Endothelial cell of umbilical vein (primary cell): ENCODE measurements at regions of chr5 and their contacts with region 1.

Region 1: GRCh38 chr5:154754460-154755360 is 467 bp upstream of the LARP1 start:
- DNase-seq: peak; percentile 99
- H3K4me3 ChIP-seq: peak overlapping the region; percentile 0 to 86 (median 7)
- H3K27ac ChIP-seq: peak overlapping the region; percentile 62
- H3K4me1 ChIP-seq: peaks cover 27% of the 10 kb centered on the region
- H3K27me3 ChIP-seq: no peaks in the 10 kb centered on the region
- CTCF ChIP-seq: peak; percentile 31 to 68
- POLR2A ChIP-seq: peak; percentile 80

Region 2: GRCh38 chr5:154647114-154647760 is 107.5 kb before region 1 on chr5:
- CTCF ChIA-PET with region 1: interaction called, 7 read pairs
- POLR2A ChIA-PET with region 1: no interaction called
- dilution Hi-C with region 1: no loop called
- intact Hi-C with region 1: loop called (anchors 1 kb)
- DNase-seq: peak; percentile 19
- H3K4me3 ChIP-seq: peak overlapping the region; percentile 1 to 28 (median 9)
- H3K27ac ChIP-seq: no peak overlapping the region
- H3K4me1 ChIP-seq: peaks cover 6% of the 10 kb centered on the region
- H3K27me3 ChIP-seq: no peaks in the 10 kb centered on the region
- CTCF ChIP-seq: no peak
- POLR2A ChIP-seq: no peak

Region 3: DNA sequence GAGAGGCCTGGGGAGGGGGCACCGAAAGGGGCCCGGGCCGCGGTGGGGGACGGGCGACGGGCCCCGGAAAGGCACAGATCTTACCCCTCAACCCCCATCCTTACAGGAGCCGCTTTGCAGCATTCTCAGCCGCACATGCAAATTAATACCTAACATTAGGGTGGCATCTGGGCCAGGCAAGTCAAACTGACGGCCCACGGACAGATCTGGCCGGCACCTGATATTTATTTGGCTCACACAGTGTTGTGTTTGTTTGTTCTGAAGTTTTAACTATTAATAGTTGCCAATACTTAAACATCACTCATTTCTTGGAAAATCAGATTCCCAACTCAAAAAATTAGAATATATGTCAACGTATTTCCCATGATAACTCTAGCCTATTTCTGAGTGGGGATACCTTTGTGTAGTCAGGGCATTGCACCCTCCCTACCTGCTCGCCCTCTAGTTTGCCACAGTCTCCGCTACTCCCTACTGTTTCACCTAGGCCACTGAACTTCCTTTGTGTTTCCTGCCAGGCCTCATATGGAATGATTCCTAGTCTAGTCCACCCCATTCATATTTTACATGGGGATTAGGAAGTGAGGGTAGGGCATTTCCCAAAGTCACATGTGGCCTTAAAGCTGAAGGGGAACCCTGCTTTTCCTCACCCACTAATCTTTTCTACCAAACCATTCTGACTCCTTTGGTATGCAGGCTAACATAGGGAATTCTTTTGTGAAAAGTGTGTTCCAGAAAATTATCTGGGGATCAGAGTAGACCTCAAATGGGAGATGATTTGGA is 71.4 kb before region 1 on chr5:
- CTCF ChIA-PET with region 1: no interaction called
- POLR2A ChIA-PET with region 1: no interaction called
- dilution Hi-C with region 1: no loop called
- intact Hi-C with region 1: loop called (anchors 1 kb)
- DNase-seq: no peak
- H3K4me3 ChIP-seq: peak overlapping the region in 1 of 3 experiments; percentile 53
- H3K27ac ChIP-seq: no peak overlapping the region
- H3K4me1 ChIP-seq: peaks cover 8% of the 10 kb centered on the region
- H3K27me3 ChIP-seq: no peaks in the 10 kb centered on the region
- CTCF ChIP-seq: no peak
- POLR2A ChIP-seq: no peak

Region 4: DNA sequence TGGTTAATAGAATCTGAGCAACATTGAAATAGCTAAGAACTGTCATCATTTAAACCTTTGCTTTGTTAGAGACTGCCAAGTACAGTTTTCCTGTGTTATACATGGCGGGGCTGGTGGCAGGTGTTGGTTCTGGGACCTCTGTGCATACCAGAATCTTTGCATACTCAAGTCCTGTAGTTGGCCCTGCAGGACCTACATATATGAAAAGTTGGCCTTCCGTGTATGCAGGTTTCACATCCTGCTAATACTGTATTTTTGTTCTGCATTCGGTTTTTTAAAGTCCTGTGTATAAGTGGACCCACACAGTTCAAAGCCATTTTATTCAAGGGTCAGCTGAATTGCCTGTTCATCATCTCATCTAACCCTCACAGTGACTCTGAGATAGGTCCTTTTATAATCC is 36.8 kb after region 1 on chr5:
- CTCF ChIA-PET with region 1: no interaction called
- POLR2A ChIA-PET with region 1: interaction called, 4 read pairs
- dilution Hi-C with region 1: no loop called
- intact Hi-C with region 1: loop called (anchors 5 kb)
- DNase-seq: no peak
- H3K4me3 ChIP-seq: no peak overlapping the region
- H3K27ac ChIP-seq: no peak overlapping the region
- H3K4me1 ChIP-seq: peaks cover 20% of the 10 kb centered on the region
- H3K27me3 ChIP-seq: no peaks in the 10 kb centered on the region
- CTCF ChIP-seq: no peak
- POLR2A ChIP-seq: no peak

Region 5: GRCh38 chr5:154940772-154941620 is 186.3 kb after region 1 on chr5 and contains the start of gene MRPL22:
- CTCF ChIA-PET with region 1: no interaction called
- POLR2A ChIA-PET with region 1: no interaction called
- dilution Hi-C with region 1: no loop called
- intact Hi-C with region 1: loop called (anchors 5 kb)
- DNase-seq: peak; percentile 95
- H3K4me3 ChIP-seq: peak within 1 kb of the TSS; percentile 84 to 99 (median 91)
- H3K27ac ChIP-seq: peak within 1 kb of the TSS; percentile 81
- H3K4me1 ChIP-seq: peaks cover 56% of the 10 kb centered on the region
- H3K27me3 ChIP-seq: no peaks in the 10 kb centered on the region
- CTCF ChIP-seq: no peak
- POLR2A ChIP-seq: peak; percentile 86
- total RNA-seq, gene MRPL22: 90.8 and 112 TPM in 2 replicates